Activated CD4-positive, alpha-beta memory T cell treated with anti-CD3 and anti-CD28 coated beads, Interleukin-2, amount 10 ng/mL, durations not matched to agents 7 days and 5 days (primary cell): ENCODE measurements at regions of chr1 and their contacts with region 1.

Region 1: GRCh38 chr1:150532868-150533302 is 16.3 kb upstream of the ADAMTSL4 start:
- DNase-seq: no peak
- H3K4me3 Mint-ChIP-seq: no peak overlapping the region
- H3K27ac Mint-ChIP-seq: no peak overlapping the region
- H3K4me1 Mint-ChIP-seq: no peaks in the 10 kb centered on the region
- H3K27me3 Mint-ChIP-seq: no peaks in the 10 kb centered on the region

Region 2: GRCh38 chr1:150515328-150516048 is 17.4 kb before region 1 on chr1 and contains the start of gene FALEC:
- CTCF ChIA-PET with region 1: interaction called, 20 read pairs
- POLR2A ChIA-PET with region 1: interaction called, 4 read pairs
- DNase-seq: peak; percentile 93
- H3K4me3 Mint-ChIP-seq: peak within 1 kb of the TSS; percentile 75
- H3K27ac Mint-ChIP-seq: peak within 1 kb of the TSS; percentile 56
- H3K4me1 Mint-ChIP-seq: peaks cover 26% of the 10 kb centered on the region
- H3K27me3 Mint-ChIP-seq: peaks cover 2% of the 10 kb centered on the region
- total RNA-seq, gene FALEC: not detected